ENCODE measurements at regions of chr6 and their contacts with region 1.

Region 1: GRCh38 chr6:74057326-74057725 is 361.3 kb downstream of the CD109 start:
- DNase-seq: no peak
- H3K4me3 ChIP-seq: no peak overlapping the region
- H3K27ac ChIP-seq: no peak overlapping the region
- H3K4me1 ChIP-seq: no peaks in the 10 kb centered on the region
- H3K27me3 ChIP-seq: no peaks in the 10 kb centered on the region
- CTCF ChIP-seq: no peak

Region 2: DNA sequence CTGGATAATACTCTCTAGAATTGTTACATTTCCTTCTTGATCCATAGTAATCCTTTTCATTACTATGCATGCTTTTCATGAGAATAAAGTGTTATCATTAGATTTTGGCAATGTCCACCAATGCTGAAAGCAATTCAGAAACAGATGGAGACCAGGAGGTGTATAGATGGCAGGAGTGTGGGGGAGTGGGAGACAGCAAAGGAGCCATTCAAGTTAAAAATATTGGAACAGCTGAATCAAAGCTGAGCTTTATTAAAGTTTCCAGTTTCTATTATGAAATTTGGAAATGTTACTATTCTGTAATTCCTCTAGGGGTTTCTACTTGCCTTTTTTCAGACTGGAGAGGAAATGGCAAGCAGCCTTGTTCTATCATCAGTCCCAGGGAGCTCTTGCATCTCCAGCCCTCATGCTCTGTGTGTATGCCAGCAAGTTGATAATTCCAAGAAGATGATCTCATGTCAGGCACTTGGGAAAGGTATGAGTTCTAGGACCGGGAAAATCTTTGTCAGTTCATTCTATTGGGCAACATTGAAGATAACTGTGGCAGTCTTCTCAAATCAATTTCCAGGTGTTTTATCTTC is 133.3 kb before region 1 on chr6:
- CTCF ChIA-PET with region 1: no interaction called
- POLR2A ChIA-PET with region 1: no interaction called
- intact Hi-C with region 1: no loop called
- DNase-seq: no peak
- H3K4me3 ChIP-seq: no peak overlapping the region
- H3K27ac ChIP-seq: no peak overlapping the region
- H3K4me1 ChIP-seq: no peaks in the 10 kb centered on the region
- H3K27me3 ChIP-seq: no peaks in the 10 kb centered on the region
- CTCF ChIP-seq: no peak

Region 3: GRCh38 chr6:74018825-74019224 is 38.5 kb before region 1 on chr6:
- CTCF ChIA-PET with region 1: no interaction called
- POLR2A ChIA-PET with region 1: no interaction called
- intact Hi-C with region 1: loop called (anchors 1 kb)
- DNase-seq: no peak
- H3K4me3 ChIP-seq: no peak overlapping the region
- H3K27ac ChIP-seq: no peak overlapping the region
- H3K4me1 ChIP-seq: no peaks in the 10 kb centered on the region
- H3K27me3 ChIP-seq: no peaks in the 10 kb centered on the region
- CTCF ChIP-seq: no peak

Region 4: GRCh38 chr6:74551896-74552295 is 494.6 kb after region 1 on chr6:
- CTCF ChIA-PET with region 1: no interaction called
- POLR2A ChIA-PET with region 1: no interaction called
- intact Hi-C with region 1: no loop called
- DNase-seq: no peak
- H3K4me3 ChIP-seq: no peak overlapping the region
- H3K27ac ChIP-seq: no peak overlapping the region
- H3K4me1 ChIP-seq: no peaks in the 10 kb centered on the region
- H3K27me3 ChIP-seq: no peaks in the 10 kb centered on the region
- CTCF ChIP-seq: no peak

Measured in PC-9 (cell line).